Right ventricle myocardium inferior (tissue), 1 donor: ENCODE measurements at regions of chr11 and their contacts with region 1.

Region 1: GRCh38 chr11:103601225-103601846 is 435.1 kb upstream of the DDI1 start:
- DNase-seq: no peak
- ATAC-seq: peak; percentile 57

Region 2: GRCh38 chr11:103202048-103202651 is 399.2 kb before region 1 on chr11:
- intact Hi-C with region 1: loop called (anchors 5 kb)
- DNase-seq: no peak
- ATAC-seq: no peak

Region 3: DNA sequence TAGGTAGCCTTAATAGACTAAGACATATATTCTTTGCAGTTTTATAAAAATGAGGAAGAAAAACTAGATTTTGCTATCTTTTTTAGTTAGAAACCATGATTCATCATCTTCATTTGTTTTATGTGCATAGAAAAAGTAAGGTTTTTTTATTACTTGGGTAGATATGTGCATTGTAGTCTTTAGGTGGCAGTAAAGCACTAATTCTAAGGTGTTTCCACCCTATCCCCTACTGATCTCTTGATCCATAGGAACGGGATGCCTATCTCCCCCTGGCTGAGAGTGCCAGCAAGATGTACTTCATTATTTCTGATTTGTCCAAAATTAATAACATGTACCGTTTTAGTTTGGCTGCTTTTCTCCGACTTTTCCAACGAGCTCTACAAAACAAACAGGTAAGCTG is 344.0 kb before region 1 on chr11:
- intact Hi-C with region 1: loop called (anchors 10 kb)
- DNase-seq: no peak
- ATAC-seq: no peak

Region 4: DNA sequence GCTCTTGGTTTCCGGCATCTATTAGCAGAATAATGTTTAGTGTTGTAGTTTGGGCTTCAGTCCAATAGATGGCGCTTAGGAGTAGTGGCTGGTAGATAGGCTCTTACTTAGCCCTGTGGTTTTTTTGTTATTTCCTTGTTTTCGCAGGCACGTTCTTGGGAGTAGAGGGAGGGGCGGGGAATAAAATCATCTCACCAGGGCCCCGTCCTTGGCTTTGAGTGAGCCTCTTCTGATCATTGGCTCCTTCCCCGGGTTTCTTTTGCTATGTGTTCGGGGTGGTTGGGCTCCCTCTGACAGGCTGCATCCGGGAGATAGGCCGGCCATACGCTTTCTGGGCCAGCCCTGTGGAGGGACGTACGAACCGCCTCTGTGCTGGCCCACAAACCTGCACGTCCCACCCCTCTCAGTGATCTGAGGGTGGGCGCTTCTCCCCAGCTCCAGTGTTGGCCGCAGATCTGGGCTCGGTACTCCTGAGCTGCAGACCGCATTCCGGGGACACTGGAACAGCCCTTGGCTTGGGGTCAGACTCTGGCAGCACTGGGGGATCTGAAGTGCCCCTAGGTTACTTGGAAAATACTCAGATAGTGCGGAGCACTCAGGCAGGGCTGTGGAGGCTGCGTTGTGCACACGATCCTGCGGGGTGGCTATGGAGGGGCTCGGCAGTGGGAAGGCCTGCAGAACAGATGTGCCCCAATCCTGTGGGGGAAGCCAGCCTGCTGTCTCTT is 275.1 kb before region 1 on chr11:
- intact Hi-C with region 1: loop called (anchors 1 kb)
- DNase-seq: no peak
- ATAC-seq: peak; percentile 44

Region 5: DNA sequence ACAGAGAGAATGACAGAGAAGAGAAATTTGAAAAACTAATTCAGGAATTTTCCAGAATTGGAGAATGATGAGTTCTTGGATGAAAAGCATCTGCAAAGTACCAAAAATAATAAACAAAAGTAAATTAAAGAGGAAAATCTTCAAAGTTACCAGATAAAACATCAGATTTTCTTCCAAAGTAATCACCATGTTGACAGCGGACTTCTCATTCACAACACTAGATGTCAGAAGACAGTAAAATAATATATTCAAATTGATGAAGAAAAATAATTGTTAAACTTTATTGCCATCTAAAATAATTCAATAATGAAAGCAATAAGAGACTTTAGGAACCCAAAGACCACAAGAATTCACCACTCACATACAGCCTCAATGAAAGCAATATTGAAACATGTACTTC is 136.9 kb before region 1 on chr11:
- intact Hi-C with region 1: loop called (anchors 10 kb)
- DNase-seq: no peak
- ATAC-seq: no peak